CD4-positive, alpha-beta T cell (primary cell): ENCODE measurements at regions of chr3 and their contacts with region 1.

Region 1: GRCh38 chr3:49619649-49620048 is 54.5 kb upstream of the APEH start:
- DNase-seq: no peak
- ATAC-seq: no peak
- H3K4me3 ChIP-seq: no peak overlapping the region
- H3K4me3 Mint-ChIP-seq: no peak overlapping the region
- H3K27ac ChIP-seq: no peak overlapping the region
- H3K27ac Mint-ChIP-seq: no peak overlapping the region
- H3K4me1 ChIP-seq: no peaks in the 10 kb centered on the region
- H3K4me1 Mint-ChIP-seq: no peaks in the 10 kb centered on the region
- H3K27me3 ChIP-seq: no peaks in the 10 kb centered on the region
- H3K27me3 Mint-ChIP-seq: no peaks in the 10 kb centered on the region
- CTCF ChIP-seq: no peak

Region 2: GRCh38 chr3:49582177-49582576 is 37.5 kb before region 1 on chr3:
- CTCF ChIA-PET with region 1: no interaction called
- POLR2A ChIA-PET with region 1: no interaction called
- intact Hi-C with region 1: loop called in 1 of 2 experiments (anchors 5 kb)
- DNase-seq: no peak
- ATAC-seq: no peak
- H3K4me3 ChIP-seq: no peak overlapping the region
- H3K4me3 Mint-ChIP-seq: no peak overlapping the region
- H3K27ac ChIP-seq: no peak overlapping the region
- H3K27ac Mint-ChIP-seq: no peak overlapping the region
- H3K4me1 ChIP-seq: no peaks in the 10 kb centered on the region
- H3K4me1 Mint-ChIP-seq: no peaks in the 10 kb centered on the region
- H3K27me3 ChIP-seq: no peaks in the 10 kb centered on the region
- H3K27me3 Mint-ChIP-seq: no peaks in the 10 kb centered on the region
- CTCF ChIP-seq: no peak

Region 3: GRCh38 chr3:49602877-49603411 is 16.7 kb before region 1 on chr3:
- CTCF ChIA-PET with region 1: no interaction called
- POLR2A ChIA-PET with region 1: no interaction called
- intact Hi-C with region 1: no loop called
- DNase-seq: peak; percentile 33 to 80 (median 54)
- ATAC-seq: peak; percentile 96
- H3K4me3 ChIP-seq: no peak overlapping the region
- H3K4me3 Mint-ChIP-seq: no peak overlapping the region
- H3K27ac ChIP-seq: peak overlapping the region in 1 of 2 donors; percentile 55
- H3K27ac Mint-ChIP-seq: peak overlapping the region; percentile 55
- H3K4me1 ChIP-seq: peaks cover 13% of the 10 kb centered on the region
- H3K4me1 Mint-ChIP-seq: peaks cover 19% of the 10 kb centered on the region
- H3K27me3 ChIP-seq: no peaks in the 10 kb centered on the region
- H3K27me3 Mint-ChIP-seq: no peaks in the 10 kb centered on the region
- CTCF ChIP-seq: no peak